ENCODE measurements at regions of chr12 and their contacts with region 1.

Region 1: DNA sequence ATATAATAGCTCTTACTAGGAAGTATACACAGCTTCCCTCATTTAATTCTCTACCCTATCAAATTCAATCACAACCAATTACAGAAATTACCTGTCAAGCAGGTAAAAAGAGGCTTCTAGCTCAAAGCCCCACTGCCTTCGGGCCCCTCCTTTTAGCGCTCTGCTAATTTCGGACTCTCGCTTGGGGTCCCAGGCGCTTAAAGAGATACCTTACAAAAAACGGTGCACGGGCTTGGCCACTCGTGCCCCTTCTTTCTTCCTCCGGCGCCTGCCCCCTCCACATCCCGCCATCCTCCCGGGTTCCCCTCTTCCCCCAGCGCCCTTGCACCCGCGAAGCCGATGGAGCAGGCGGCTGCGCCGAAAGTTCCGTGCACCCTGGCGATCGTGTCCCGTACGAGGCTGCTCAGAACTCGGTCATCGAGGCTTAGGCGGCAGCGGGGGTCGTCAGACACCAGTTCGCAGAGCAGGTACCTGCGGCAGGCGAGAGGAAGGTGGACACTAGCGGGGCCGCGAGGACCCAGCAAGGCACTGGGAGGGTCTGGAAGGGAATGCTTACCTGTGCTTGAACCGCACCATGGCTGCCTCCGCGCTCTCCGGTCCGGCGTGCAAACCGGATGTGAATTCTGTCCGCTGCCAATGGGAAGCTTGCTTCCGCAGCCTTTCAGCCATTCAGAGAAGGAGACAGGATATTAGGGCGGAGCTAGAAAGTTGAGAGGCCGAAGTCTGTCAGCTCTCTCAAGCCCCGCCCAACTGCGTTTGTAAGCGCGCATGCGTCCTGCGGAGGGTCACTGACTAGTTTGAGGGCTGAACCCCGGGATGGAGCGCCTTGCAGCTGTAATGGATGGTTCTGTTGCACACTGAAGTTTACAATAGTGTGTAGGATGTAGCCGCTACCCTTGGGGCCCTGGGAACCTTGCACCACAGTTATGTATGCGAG is at the start of gene POP5:
- DNase-seq: peak; percentile 93
- ATAC-seq: peak; percentile 95
- H3K4me3 ChIP-seq: peak within 1 kb of the TSS; percentile 91
- H3K27ac ChIP-seq: peak within 1 kb of the TSS; percentile 44
- H3K4me1 ChIP-seq: peaks cover 11% of the 10 kb centered on the region
- H3K27me3 ChIP-seq: no peaks in the 10 kb centered on the region; a peak in 1 of 4 replicates
- CTCF ChIP-seq: no peak
- EP300 ChIP-seq: no peak
- POLR2A ChIP-seq: peak; percentile 97
- RAD21 ChIP-seq: no peak
- polyA plus RNA-seq, gene POP5: 217 to 234 TPM

Region 2: GRCh38 chr12:120437754-120438494 is 143.1 kb before region 1 on chr12 and contains the start of gene COX6A1:
- CTCF ChIA-PET with region 1: interaction called, 19 read pairs
- POLR2A ChIA-PET with region 1: interaction called, 7 read pairs
- RAD21 ChIA-PET with region 1: interaction called, 8 read pairs
- SMC1A ChIA-PET with region 1: interaction called, 13 read pairs
- in situ Hi-C with region 1: no loop called
- intact Hi-C with region 1: no loop called
- DNase-seq: peak; percentile 99
- ATAC-seq: peak; percentile 97
- H3K4me3 ChIP-seq: peak within 1 kb of the TSS; percentile 89
- H3K27ac ChIP-seq: peak within 1 kb of the TSS; percentile 53
- H3K4me1 ChIP-seq: no peaks in the 10 kb centered on the region; the same call in 1 of the 2 replicates
- H3K27me3 ChIP-seq: no peaks in the 10 kb centered on the region
- CTCF ChIP-seq: peak in 2 of 3 experiments; percentile 18 to 32; a peak in 1 of 6 replicates
- EP300 ChIP-seq: 0 out of 4 replicates have a peak, but pooled peaks of 1 of the 2 experiments have one; percentile 27
- POLR2A ChIP-seq: peak; percentile 87
- RAD21 ChIP-seq: no peak
- polyA plus RNA-seq, gene COX6A1: 2,509 to 2,723 TPM

Region 3: DNA sequence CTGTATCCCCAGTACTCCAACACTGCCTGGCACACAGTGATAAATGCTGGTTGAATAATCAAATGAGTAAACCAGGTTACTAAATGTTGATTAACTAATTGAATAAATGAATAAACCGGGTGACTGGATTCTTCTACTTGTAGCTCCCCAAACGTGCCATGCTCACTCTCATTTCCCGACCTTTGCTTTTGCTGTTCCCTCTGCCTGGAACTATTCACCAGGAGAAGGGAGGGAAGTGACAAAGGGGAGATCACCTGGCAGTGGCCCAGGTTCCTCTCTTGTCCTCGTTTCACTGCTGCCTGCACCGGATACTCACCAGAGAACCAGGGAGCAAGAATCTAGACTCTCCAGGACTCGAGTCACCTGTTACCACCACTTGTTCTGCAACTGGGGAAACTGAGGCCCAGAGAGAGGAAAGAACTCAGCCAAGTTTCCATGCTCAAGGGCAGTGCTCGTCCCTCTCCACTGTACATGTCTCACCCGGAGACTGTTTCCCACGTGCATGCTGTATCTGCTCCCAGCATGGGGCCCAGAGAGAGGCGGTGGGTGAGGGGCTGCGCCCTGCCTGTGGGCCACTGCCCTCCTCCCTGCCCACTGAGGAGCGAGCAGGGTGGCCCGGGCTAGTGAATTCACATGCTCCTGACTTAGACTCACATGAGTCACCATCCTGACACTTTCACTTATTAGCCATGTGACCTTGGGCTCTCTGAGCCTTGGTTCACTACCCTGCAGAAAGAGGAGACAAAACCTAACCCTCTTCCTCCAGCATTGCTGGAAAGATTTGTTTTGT is 17.8 kb after region 1 on chr12:
- CTCF ChIA-PET with region 1: interaction called, 15 read pairs
- POLR2A ChIA-PET with region 1: no interaction called
- RAD21 ChIA-PET with region 1: interaction called, 3 read pairs
- SMC1A ChIA-PET with region 1: interaction called, 3 read pairs
- in situ Hi-C with region 1: no loop called
- intact Hi-C with region 1: no loop called
- DNase-seq: no peak
- ATAC-seq: peak; percentile 86
- H3K4me3 ChIP-seq: no peak overlapping the region
- H3K27ac ChIP-seq: no peak overlapping the region
- H3K4me1 ChIP-seq: no peaks in the 10 kb centered on the region
- H3K27me3 ChIP-seq: peaks cover 0 to 3% of the 10 kb centered on the region in 2 experiments; a peak in 2 of 4 replicates
- CTCF ChIP-seq: no peak
- EP300 ChIP-seq: no peak
- POLR2A ChIP-seq: no peak
- RAD21 ChIP-seq: no peak

Region 4: GRCh38 chr12:120686690-120687577 is 105.9 kb after region 1 on chr12 and contains the start of gene MLEC:
- CTCF ChIA-PET with region 1: interaction called, 9 read pairs
- POLR2A ChIA-PET with region 1: interaction called, 14 read pairs
- RAD21 ChIA-PET with region 1: interaction called, 11 read pairs
- SMC1A ChIA-PET with region 1: interaction called, 3 read pairs
- in situ Hi-C with region 1: no loop called
- intact Hi-C with region 1: loop called (anchors 2 kb)
- DNase-seq: peak; percentile 91
- ATAC-seq: peak; percentile 78
- H3K4me3 ChIP-seq: peak within 1 kb of the TSS; percentile 97
- H3K27ac ChIP-seq: peak within 1 kb of the TSS; percentile 96
- H3K4me1 ChIP-seq: peaks cover 15% of the 10 kb centered on the region
- H3K27me3 ChIP-seq: no peaks in the 10 kb centered on the region
- CTCF ChIP-seq: peak; percentile 26 to 79 (median 41); a peak in 5 of 6 replicates
- EP300 ChIP-seq: peak in 1 of 2 experiments; percentile 21; a peak in 1 of 4 replicates
- POLR2A ChIP-seq: peak; percentile 91
- RAD21 ChIP-seq: peak; percentile 68
- polyA plus RNA-seq, gene MLEC: 26.7 to 28.2 TPM

Region 5: DNA sequence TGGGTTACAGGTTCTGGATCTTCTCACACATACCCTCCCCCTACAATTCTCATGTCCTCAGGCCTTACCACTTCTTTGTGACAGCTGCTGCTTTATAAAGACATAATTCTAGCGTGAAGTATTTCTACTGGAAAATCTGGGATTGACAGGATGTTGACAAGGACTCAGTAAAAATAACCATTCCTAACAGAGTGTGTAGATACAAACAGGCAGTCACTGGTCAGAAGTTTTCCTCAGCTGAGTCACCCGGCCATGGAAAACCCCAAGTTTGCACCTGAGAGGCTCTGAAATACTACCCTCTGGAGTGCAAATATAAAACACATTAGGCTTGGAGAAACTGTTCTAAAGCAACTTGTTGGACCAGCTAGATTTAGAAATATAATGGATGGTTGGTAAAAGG is 268.7 kb after region 1 on chr12:
- CTCF ChIA-PET with region 1: interaction called, 3 read pairs
- POLR2A ChIA-PET with region 1: no interaction called
- RAD21 ChIA-PET with region 1: no interaction called
- SMC1A ChIA-PET with region 1: no interaction called
- in situ Hi-C with region 1: no loop called
- intact Hi-C with region 1: loop called (anchors 5 kb)
- DNase-seq: no peak
- ATAC-seq: no peak
- H3K4me3 ChIP-seq: no peak overlapping the region
- H3K27ac ChIP-seq: peak overlapping the region; percentile 54
- H3K4me1 ChIP-seq: peaks cover 68% of the 10 kb centered on the region
- H3K27me3 ChIP-seq: no peaks in the 10 kb centered on the region
- CTCF ChIP-seq: no peak
- EP300 ChIP-seq: no peak
- POLR2A ChIP-seq: no peak
- RAD21 ChIP-seq: no peak

Region 6: DNA sequence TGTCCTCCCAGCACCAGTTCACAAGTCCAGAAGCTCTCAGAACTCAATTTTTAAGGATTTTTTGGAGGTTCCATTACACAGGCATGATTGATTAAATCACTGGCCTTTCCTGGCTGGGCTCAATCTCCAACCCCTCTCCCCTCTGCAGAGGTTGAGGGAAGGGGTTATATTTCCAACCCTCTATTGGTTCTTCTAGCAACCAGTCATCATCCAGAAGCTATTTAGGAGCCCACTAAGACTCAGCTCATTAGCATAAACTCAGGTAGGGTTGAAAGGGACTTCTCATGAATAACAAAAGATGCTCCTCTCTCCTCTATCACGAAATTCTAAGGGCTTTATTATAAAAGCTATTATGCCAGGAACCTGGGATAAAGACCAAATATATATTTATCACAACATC is 281.6 kb after region 1 on chr12:
- CTCF ChIA-PET with region 1: no interaction called
- POLR2A ChIA-PET with region 1: no interaction called
- RAD21 ChIA-PET with region 1: no interaction called
- SMC1A ChIA-PET with region 1: no interaction called
- in situ Hi-C with region 1: no loop called
- intact Hi-C with region 1: no loop called
- DNase-seq: no peak
- ATAC-seq: no peak
- H3K4me3 ChIP-seq: no peak overlapping the region
- H3K27ac ChIP-seq: no peak overlapping the region
- H3K4me1 ChIP-seq: peaks cover 12% of the 10 kb centered on the region; the same call in 1 of the 2 replicates
- H3K27me3 ChIP-seq: no peaks in the 10 kb centered on the region
- CTCF ChIP-seq: no peak
- EP300 ChIP-seq: no peak
- POLR2A ChIP-seq: no peak
- RAD21 ChIP-seq: no peak

Region 7: DNA sequence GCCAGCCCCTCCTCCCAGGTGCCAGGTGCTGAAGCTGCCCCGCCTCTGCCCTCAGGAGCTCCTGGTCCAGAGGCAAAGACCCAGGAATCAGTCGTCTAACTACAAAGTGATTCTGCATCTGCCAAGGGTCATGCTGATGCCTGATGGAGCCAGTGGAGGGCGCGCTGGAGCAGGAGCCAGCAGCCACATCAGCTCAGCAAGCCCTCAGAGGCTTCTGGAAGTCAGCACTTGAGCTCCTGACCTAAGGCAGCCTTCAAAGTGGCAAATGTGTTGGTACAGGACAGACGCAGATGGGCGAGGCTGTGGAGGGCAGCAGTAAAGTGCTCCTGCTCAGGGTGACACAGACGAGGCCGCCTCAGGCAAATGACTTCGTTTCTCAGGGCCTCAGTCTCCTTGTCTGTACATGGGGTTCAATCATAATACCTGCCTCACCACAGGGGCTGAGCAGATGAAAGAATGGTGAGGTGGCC is 424.3 kb after region 1 on chr12:
- CTCF ChIA-PET with region 1: interaction called, 7 read pairs
- POLR2A ChIA-PET with region 1: interaction called, 5 read pairs
- RAD21 ChIA-PET with region 1: no interaction called
- SMC1A ChIA-PET with region 1: interaction called, 4 read pairs
- in situ Hi-C with region 1: no loop called
- intact Hi-C with region 1: loop called (anchors 5 kb)
- DNase-seq: no peak
- ATAC-seq: peak; percentile 87
- H3K4me3 ChIP-seq: no peak overlapping the region
- H3K27ac ChIP-seq: no peak overlapping the region
- H3K4me1 ChIP-seq: no peaks in the 10 kb centered on the region
- H3K27me3 ChIP-seq: no peaks in the 10 kb centered on the region
- CTCF ChIP-seq: peak; percentile 63 to 77 (median 73)
- EP300 ChIP-seq: no peak
- POLR2A ChIP-seq: no peak
- RAD21 ChIP-seq: peak; percentile 53

Region 8: DNA sequence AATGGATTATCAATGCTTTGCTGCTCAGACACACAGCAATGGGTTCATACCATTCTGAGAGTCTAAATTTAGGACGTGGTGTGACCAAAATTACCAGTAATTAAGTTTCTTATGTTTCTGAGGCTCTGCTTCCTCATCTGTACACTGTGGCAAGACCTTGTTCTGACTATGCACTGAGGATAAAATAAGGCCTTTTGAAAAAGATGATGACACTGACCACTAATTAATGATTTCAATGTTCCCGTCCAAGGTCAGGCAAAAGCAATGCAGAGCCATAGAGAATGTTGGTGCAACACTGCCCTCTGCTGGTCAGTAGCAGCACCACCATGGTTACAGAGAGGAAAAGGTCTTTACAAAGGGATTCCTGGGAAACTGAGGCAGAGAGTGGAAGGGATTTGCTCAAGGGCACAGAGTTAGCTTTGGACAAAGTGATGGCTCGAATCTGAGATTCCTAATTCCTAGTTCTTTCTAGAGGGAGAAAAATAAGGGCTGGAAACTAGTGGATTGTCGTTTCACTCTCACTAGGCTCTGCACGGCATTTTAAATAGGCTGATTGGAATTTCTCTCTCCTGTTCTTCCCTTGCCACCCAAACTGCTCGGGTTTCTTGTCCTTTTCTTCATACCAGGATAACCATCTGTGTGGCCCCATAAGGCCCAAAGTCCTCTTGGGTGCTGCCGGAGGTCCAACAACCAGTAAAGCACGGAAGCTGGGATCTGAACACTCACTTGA is 529.3 kb after region 1 on chr12:
- CTCF ChIA-PET with region 1: interaction called, 16 read pairs
- POLR2A ChIA-PET with region 1: no interaction called
- RAD21 ChIA-PET with region 1: interaction called, 5 read pairs
- SMC1A ChIA-PET with region 1: interaction called, 5 read pairs
- in situ Hi-C with region 1: no loop called
- intact Hi-C with region 1: loop called (anchors 1 kb)
- DNase-seq: peak; percentile 78
- ATAC-seq: peak; percentile 95
- H3K4me3 ChIP-seq: no peak overlapping the region
- H3K27ac ChIP-seq: no peak overlapping the region
- H3K4me1 ChIP-seq: 0 out of 2 replicates have a peak, but pooled peaks cover 2% of the 10 kb centered on the region
- H3K27me3 ChIP-seq: no peaks in the 10 kb centered on the region
- CTCF ChIP-seq: peak; percentile 86 to 96 (median 94); a peak in 5 of 6 replicates
- EP300 ChIP-seq: peak; percentile 44 to 82; a peak in 1 of 4 replicates
- POLR2A ChIP-seq: no peak
- RAD21 ChIP-seq: peak; percentile 93